CD4-positive, alpha-beta T cell (primary cell): ENCODE measurements at regions of chr6 and their contacts with region 1.

Region 1: GRCh38 chr6:142146828-142147662 is at the starts of genes NMBR and VTA1:
- DNase-seq: peak; percentile 89 to 99 (median 94)
- ATAC-seq: peak; percentile 94
- H3K4me3 ChIP-seq: peak within 1 kb of the TSS; percentile 78
- H3K4me3 Mint-ChIP-seq: peak within 1 kb of the TSS; percentile 97
- H3K27ac ChIP-seq: peak within 1 kb of the TSS; percentile 56 to 68
- H3K27ac Mint-ChIP-seq: peak within 1 kb of the TSS; percentile 89
- H3K4me1 ChIP-seq: peaks cover 8% of the 10 kb centered on the region
- H3K4me1 Mint-ChIP-seq: peaks cover 72% of the 10 kb centered on the region
- H3K27me3 ChIP-seq: no peaks in the 10 kb centered on the region
- H3K27me3 Mint-ChIP-seq: no peaks in the 10 kb centered on the region
- CTCF ChIP-seq: peak; percentile 94
- total RNA-seq, gene NMBR: not detected
- total RNA-seq, gene VTA1: 13.5 to 18.0 TPM

Region 2: GRCh38 chr6:142395768-142396231 is 248.8 kb after region 1 on chr6:
- CTCF ChIA-PET with region 1: interaction called, 6 read pairs
- POLR2A ChIA-PET with region 1: interaction called, 4 read pairs
- intact Hi-C with region 1: loop called in 1 of 2 experiments (anchors 5 kb)
- DNase-seq: peak in 3 of 14 experiments; percentile 78 to 87 (median 85)
- ATAC-seq: peak; percentile 92
- H3K4me3 ChIP-seq: peak overlapping the region; percentile 7
- H3K4me3 Mint-ChIP-seq: peak overlapping the region; percentile 42
- H3K27ac ChIP-seq: peak overlapping the region in 1 of 2 donors; percentile 79
- H3K27ac Mint-ChIP-seq: peak overlapping the region; percentile 92
- H3K4me1 ChIP-seq: peaks cover 3% of the 10 kb centered on the region
- H3K4me1 Mint-ChIP-seq: peaks cover 50% of the 10 kb centered on the region
- H3K27me3 ChIP-seq: no peaks in the 10 kb centered on the region
- H3K27me3 Mint-ChIP-seq: no peaks in the 10 kb centered on the region
- CTCF ChIP-seq: no peak

Region 3: GRCh38 chr6:142833054-142833453 is 686.0 kb after region 1 on chr6:
- CTCF ChIA-PET with region 1: no interaction called
- POLR2A ChIA-PET with region 1: no interaction called
- intact Hi-C with region 1: no loop called
- DNase-seq: peak in 2 of 14 experiments; percentile 39 to 54
- ATAC-seq: peak; percentile 37
- H3K4me3 ChIP-seq: no peak overlapping the region
- H3K4me3 Mint-ChIP-seq: no peak overlapping the region
- H3K27ac ChIP-seq: no peak overlapping the region
- H3K27ac Mint-ChIP-seq: peak overlapping the region; percentile 31
- H3K4me1 ChIP-seq: peaks cover 12% of the 10 kb centered on the region
- H3K4me1 Mint-ChIP-seq: peaks cover 89% of the 10 kb centered on the region
- H3K27me3 ChIP-seq: no peaks in the 10 kb centered on the region
- H3K27me3 Mint-ChIP-seq: no peaks in the 10 kb centered on the region
- CTCF ChIP-seq: no peak

Region 4: GRCh38 chr6:143060354-143060805 is 913.3 kb after region 1 on chr6:
- CTCF ChIA-PET with region 1: no interaction called
- POLR2A ChIA-PET with region 1: no interaction called
- intact Hi-C with region 1: loop called in 1 of 2 experiments (anchors 10 kb)
- DNase-seq: peak; percentile 50 to 90 (median 68)
- ATAC-seq: peak; percentile 60
- H3K4me3 ChIP-seq: peak overlapping the region; percentile 94
- H3K4me3 Mint-ChIP-seq: peak overlapping the region; percentile 98
- H3K27ac ChIP-seq: peak overlapping the region; percentile 60 to 81
- H3K27ac Mint-ChIP-seq: peak overlapping the region; percentile 98
- H3K4me1 ChIP-seq: peaks cover 19% of the 10 kb centered on the region
- H3K4me1 Mint-ChIP-seq: peaks cover 28% of the 10 kb centered on the region
- H3K27me3 ChIP-seq: no peaks in the 10 kb centered on the region
- H3K27me3 Mint-ChIP-seq: no peaks in the 10 kb centered on the region
- CTCF ChIP-seq: peak; percentile 42

Region 5: DNA sequence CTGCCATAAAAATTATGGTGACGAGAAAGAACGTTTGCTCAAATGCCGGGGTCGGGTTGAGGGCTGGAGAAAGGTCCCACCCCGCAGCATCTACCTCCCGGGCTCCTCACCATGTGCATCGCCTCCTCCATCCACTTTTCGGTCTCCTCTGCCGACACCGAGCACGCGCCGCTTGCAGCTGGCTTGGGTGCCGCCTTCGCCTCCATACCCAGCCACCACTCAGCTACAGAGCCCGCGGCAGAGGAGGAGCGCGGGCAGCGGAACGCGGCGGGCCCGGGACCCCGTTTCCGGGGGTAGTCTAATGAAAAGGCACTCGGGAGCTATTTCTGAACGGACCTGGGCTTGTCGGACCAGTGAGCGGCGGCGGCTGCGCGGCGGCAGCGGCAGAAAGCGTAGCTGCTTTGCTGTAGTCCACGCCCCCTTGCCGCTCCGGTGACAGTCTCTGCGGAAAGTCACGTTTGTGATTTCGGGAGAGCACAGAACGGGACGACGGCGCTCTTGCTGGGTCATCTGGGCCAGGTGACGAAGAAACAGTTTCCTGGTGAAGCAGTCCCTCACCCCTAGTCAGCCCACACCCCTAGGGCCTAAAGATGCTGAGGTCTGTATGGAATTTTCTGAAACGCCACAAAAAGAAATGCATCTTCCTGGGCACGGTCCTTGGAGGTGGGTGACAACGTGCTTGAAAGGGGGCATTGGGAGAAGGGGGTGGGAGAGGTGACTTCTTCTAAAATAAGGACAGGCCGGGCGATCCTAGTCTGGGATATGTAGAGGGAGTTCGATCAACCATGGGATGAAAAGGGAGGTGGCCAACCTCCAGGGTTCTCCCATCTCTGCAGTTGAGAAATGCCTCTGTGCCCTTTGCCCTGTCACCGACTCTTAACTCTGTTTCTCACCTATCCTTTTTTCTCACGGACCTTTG is 1303.7 kb after region 1 on chr6 and contains the starts of genes ADAT2 and PEX3:
- CTCF ChIA-PET with region 1: interaction called, 4 read pairs
- POLR2A ChIA-PET with region 1: interaction called, 10 read pairs
- intact Hi-C with region 1: loop called (anchors 1 to 2 kb)
- DNase-seq: peak; percentile 85 to 97 (median 90)
- ATAC-seq: peak; percentile 90
- H3K4me3 ChIP-seq: peak within 1 kb of the TSS; percentile 72
- H3K4me3 Mint-ChIP-seq: peak within 1 kb of the TSS; percentile 99
- H3K27ac ChIP-seq: peak within 1 kb of the TSS; percentile 72 to 78
- H3K27ac Mint-ChIP-seq: peak within 1 kb of the TSS; percentile 94
- H3K4me1 ChIP-seq: peaks cover 15% of the 10 kb centered on the region
- H3K4me1 Mint-ChIP-seq: peaks cover 60% of the 10 kb centered on the region
- H3K27me3 ChIP-seq: no peaks in the 10 kb centered on the region
- H3K27me3 Mint-ChIP-seq: no peaks in the 10 kb centered on the region
- CTCF ChIP-seq: no peak
- total RNA-seq, gene ADAT2: 14.6 to 17.4 TPM
- total RNA-seq, gene PEX3: 7.3 to 9.7 TPM

Region 6: GRCh38 chr6:144063744-144064401 is 1916.8 kb after region 1 on chr6:
- CTCF ChIA-PET with region 1: no interaction called
- POLR2A ChIA-PET with region 1: no interaction called
- intact Hi-C with region 1: loop called in 1 of 2 experiments (anchors 10 kb)
- DNase-seq: peak; percentile 84 to 96 (median 91)
- ATAC-seq: peak; percentile 90
- H3K4me3 ChIP-seq: peak overlapping the region; percentile 73
- H3K4me3 Mint-ChIP-seq: peak overlapping the region; percentile 95
- H3K27ac ChIP-seq: peak overlapping the region; percentile 75 to 90
- H3K27ac Mint-ChIP-seq: peak overlapping the region; percentile 95
- H3K4me1 ChIP-seq: peaks cover 20% of the 10 kb centered on the region
- H3K4me1 Mint-ChIP-seq: peaks cover 31% of the 10 kb centered on the region
- H3K27me3 ChIP-seq: no peaks in the 10 kb centered on the region
- H3K27me3 Mint-ChIP-seq: no peaks in the 10 kb centered on the region
- CTCF ChIP-seq: peak; percentile 41